ENCODE measurements at regions of chr1 and their contacts with region 1.

Region 1: GRCh38 chr1:150532868-150533302 is 16.3 kb upstream of the ADAMTSL4 start:
- DNase-seq: peak; percentile 52
- ATAC-seq: no peak

Region 2: GRCh38 chr1:150429805-150430204 is 103.1 kb before region 1 on chr1:
- intact Hi-C with region 1: no loop called
- DNase-seq: no peak
- ATAC-seq: no peak

Region 3: DNA sequence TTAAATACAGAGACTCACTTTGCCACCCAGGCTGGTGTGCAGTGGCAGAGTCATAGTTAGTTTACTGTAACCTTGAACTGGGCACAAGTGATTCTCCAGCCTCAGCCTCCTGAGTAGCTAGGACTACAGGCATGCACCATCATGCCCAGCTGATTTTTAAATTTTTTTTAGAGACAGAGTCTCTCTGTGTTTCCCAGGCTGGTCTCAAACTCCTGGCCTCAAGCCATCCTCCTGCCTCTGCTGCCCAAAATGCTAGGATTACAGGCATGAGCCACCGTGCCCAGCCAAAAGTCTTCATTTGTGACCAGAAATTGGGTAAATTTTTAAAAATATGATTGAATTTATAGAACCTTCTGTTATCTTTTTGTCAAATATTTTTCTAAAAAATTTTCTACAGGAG is 63.6 kb before region 1 on chr1:
- intact Hi-C with region 1: loop called (anchors 5 kb)
- DNase-seq: no peak
- ATAC-seq: no peak

Measured in Right ventricle myocardium superior (tissue), 1 donor.